Panc1 (cell line): ENCODE measurements at regions of chr14 and their contacts with region 1.

Region 1: GRCh38 chr14:55212634-55213033 is 21.2 kb upstream of the DLGAP5 start:
- DNase-seq: no peak
- ATAC-seq: no peak
- H3K4me3 ChIP-seq: no peak overlapping the region
- H3K27ac ChIP-seq: no peak overlapping the region
- H3K4me1 ChIP-seq: no peaks in the 10 kb centered on the region
- H3K27me3 ChIP-seq: no peaks in the 10 kb centered on the region
- CTCF ChIP-seq: no peak

Region 2: DNA sequence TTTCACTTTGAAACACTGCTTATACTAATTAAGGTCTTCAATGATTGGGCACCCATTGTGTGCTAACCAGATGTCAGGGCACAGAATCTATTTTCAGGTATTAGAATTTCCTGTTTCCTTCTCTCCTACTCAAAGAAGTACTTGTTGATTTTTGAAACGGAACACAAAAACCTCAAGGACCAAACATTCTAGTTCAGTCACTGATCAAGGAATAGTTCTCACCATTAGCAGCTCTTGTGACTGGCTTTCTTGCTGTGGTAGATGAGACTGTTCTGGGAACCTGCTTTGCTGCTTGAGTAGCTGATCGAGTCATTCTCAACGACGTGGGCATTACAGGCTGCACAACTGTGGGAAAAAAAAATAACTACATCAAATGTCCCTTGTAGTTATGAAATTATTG is 32.2 kb before region 1 on chr14:
- CTCF ChIA-PET with region 1: no interaction called
- POLR2A ChIA-PET with region 1: no interaction called
- in situ Hi-C with region 1: no loop called
- intact Hi-C with region 1: no loop called
- DNase-seq: no peak
- ATAC-seq: no peak
- H3K4me3 ChIP-seq: no peak overlapping the region
- H3K27ac ChIP-seq: no peak overlapping the region
- H3K4me1 ChIP-seq: no peaks in the 10 kb centered on the region
- H3K27me3 ChIP-seq: no peaks in the 10 kb centered on the region
- CTCF ChIP-seq: no peak

Region 3: GRCh38 chr14:55354500-55354899 is 141.9 kb after region 1 on chr14:
- CTCF ChIA-PET with region 1: interaction called, 8 read pairs
- POLR2A ChIA-PET with region 1: no interaction called
- in situ Hi-C with region 1: no loop called
- intact Hi-C with region 1: loop called (anchors 5 kb)
- DNase-seq: no peak
- ATAC-seq: peak; percentile 86
- H3K4me3 ChIP-seq: no peak overlapping the region
- H3K27ac ChIP-seq: no peak overlapping the region
- H3K4me1 ChIP-seq: no peaks in the 10 kb centered on the region
- H3K27me3 ChIP-seq: no peaks in the 10 kb centered on the region
- CTCF ChIP-seq: peak; percentile 81

Region 4: DNA sequence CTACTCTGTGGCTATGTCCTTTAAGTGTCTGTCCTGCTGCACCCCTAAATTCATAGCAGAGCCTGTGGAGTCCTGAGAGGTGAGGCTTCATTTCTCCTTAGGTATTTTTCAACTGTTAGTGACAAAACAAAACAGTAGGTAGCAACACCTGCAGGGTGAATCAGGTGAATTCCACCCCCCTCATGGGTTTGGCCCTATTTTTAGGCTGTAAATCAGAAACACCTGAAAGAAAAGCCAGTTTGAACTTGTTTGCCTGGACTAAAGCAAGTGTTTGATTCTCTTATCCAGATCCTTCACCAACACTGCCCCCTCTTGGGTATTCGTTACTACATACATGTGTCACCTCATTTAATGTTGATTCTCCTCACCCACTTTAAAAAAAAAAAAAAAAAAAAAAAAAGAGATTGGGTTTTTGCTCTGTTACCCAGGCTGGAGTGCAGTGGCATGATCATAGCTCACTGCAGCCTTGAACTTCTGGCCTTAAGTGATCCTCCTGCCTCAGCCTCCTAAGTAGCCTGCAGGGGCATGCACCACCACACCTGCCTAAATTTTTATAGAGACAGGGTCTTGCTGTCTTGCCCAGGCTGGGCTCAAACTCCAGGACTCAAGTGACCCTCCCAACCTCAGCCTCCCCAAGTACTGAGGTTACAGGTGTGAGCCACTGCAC is 217.5 kb after region 1 on chr14:
- CTCF ChIA-PET with region 1: interaction called, 3 read pairs
- POLR2A ChIA-PET with region 1: no interaction called
- in situ Hi-C with region 1: no loop called
- intact Hi-C with region 1: loop called (anchors 5 kb)
- DNase-seq: no peak
- ATAC-seq: peak; percentile 86
- H3K4me3 ChIP-seq: no peak overlapping the region
- H3K27ac ChIP-seq: no peak overlapping the region
- H3K4me1 ChIP-seq: peaks cover 6% of the 10 kb centered on the region
- H3K27me3 ChIP-seq: no peaks in the 10 kb centered on the region
- CTCF ChIP-seq: peak; percentile 66

Region 5: DNA sequence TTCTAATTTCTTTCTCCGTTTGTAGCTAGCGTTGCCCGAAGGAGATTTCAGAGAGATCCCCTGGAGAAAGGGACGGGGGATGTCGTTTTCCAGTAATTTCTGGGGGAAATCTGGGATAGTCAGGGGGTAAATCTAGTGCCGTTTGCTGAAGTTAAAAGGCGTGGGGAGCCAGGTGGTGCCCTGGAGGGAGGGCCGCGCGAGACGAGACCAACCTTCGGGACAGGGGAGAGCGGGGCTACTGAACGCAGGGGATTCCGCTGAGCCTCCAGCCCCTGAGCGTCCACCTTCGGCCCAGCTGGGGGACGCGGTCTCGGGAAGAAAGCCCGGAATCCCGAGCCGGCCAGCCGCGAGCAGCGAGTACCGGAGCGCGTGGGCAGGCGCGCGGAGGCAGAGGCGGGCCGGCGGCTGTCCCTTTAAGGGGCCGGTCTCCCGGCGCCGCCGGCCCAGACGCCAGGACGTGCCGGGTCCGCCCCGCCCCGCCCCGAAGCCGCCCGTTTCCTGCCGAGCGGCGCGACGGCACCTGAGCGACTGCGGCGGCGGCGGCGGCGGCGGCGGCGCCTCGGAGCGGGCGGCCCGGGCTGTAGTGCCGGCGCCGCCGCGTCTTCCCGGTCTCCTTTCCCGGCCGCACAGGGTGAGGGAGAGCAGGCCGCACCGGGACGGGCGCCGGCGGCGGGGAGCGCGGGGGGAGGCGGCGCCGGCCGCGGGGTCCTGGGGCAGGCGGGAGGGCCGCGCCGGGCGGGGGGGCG is 367.3 kb after region 1 on chr14 and contains the start of gene KTN1:
- CTCF ChIA-PET with region 1: no interaction called
- POLR2A ChIA-PET with region 1: no interaction called
- in situ Hi-C with region 1: no loop called
- intact Hi-C with region 1: loop called (anchors 10 kb)
- DNase-seq: no peak
- ATAC-seq: peak; percentile 88
- H3K4me3 ChIP-seq: peak within 1 kb of the TSS; percentile 79 to 81
- H3K27ac ChIP-seq: peak within 1 kb of the TSS; percentile 95
- H3K4me1 ChIP-seq: peaks cover 26% of the 10 kb centered on the region
- H3K27me3 ChIP-seq: no peaks in the 10 kb centered on the region
- CTCF ChIP-seq: no peak
- total RNA-seq, gene KTN1: 310 TPM